Endothelial cell of umbilical vein (primary cell): ENCODE measurements at regions of chr11 and their contacts with region 1.

Region 1: GRCh38 chr11:108647701-108648527 is 17.0 kb upstream of the DDX10 start:
- DNase-seq: peak; percentile 77
- H3K4me3 ChIP-seq: no peak overlapping the region
- H3K27ac ChIP-seq: no peak overlapping the region
- H3K4me1 ChIP-seq: no peaks in the 10 kb centered on the region
- H3K27me3 ChIP-seq: peaks cover 0 to 3% of the 10 kb centered on the region in 2 experiments
- CTCF ChIP-seq: peak; percentile 77 to 84
- POLR2A ChIP-seq: no peak

Region 2: GRCh38 chr11:107999759-108000455 is 648.0 kb before region 1 on chr11:
- CTCF ChIA-PET with region 1: interaction called, 29 read pairs
- POLR2A ChIA-PET with region 1: no interaction called
- dilution Hi-C with region 1: no loop called
- intact Hi-C with region 1: no loop called
- DNase-seq: peak; percentile 61
- H3K4me3 ChIP-seq: no peak overlapping the region
- H3K27ac ChIP-seq: no peak overlapping the region
- H3K4me1 ChIP-seq: no peaks in the 10 kb centered on the region
- H3K27me3 ChIP-seq: peaks cover 2 to 3% of the 10 kb centered on the region in 2 experiments
- CTCF ChIP-seq: peak; percentile 27 to 52
- POLR2A ChIP-seq: no peak

Region 3: GRCh38 chr11:108121274-108122155 is 526.4 kb before region 1 on chr11 and contains the start of gene ACAT1:
- CTCF ChIA-PET with region 1: interaction called, 144 read pairs
- POLR2A ChIA-PET with region 1: no interaction called
- dilution Hi-C with region 1: no loop called
- intact Hi-C with region 1: loop called (anchors 1 kb)
- DNase-seq: peak; percentile 92
- H3K4me3 ChIP-seq: peak within 1 kb of the TSS; percentile 58 to 85 (median 60)
- H3K27ac ChIP-seq: peak within 1 kb of the TSS; percentile 19
- H3K4me1 ChIP-seq: peaks cover 16% of the 10 kb centered on the region
- H3K27me3 ChIP-seq: no peaks in the 10 kb centered on the region
- CTCF ChIP-seq: peak in 1 of 2 donors; percentile 38
- POLR2A ChIP-seq: peak; percentile 87
- total RNA-seq, gene ACAT1: 51.7 and 59.9 TPM in 2 replicates

Region 4: GRCh38 chr11:108324587-108324986 is 323.3 kb before region 1 on chr11:
- CTCF ChIA-PET with region 1: no interaction called
- POLR2A ChIA-PET with region 1: no interaction called
- dilution Hi-C with region 1: no loop called
- intact Hi-C with region 1: loop called (anchors 10 kb)
- DNase-seq: no peak
- H3K4me3 ChIP-seq: no peak overlapping the region
- H3K27ac ChIP-seq: no peak overlapping the region
- H3K4me1 ChIP-seq: no peaks in the 10 kb centered on the region
- H3K27me3 ChIP-seq: no peaks in the 10 kb centered on the region
- CTCF ChIP-seq: no peak
- POLR2A ChIP-seq: no peak

Region 5: GRCh38 chr11:108398439-108398838 is 249.5 kb before region 1 on chr11:
- CTCF ChIA-PET with region 1: no interaction called
- POLR2A ChIA-PET with region 1: no interaction called
- dilution Hi-C with region 1: no loop called
- intact Hi-C with region 1: no loop called
- DNase-seq: no peak
- H3K4me3 ChIP-seq: no peak overlapping the region
- H3K27ac ChIP-seq: no peak overlapping the region
- H3K4me1 ChIP-seq: no peaks in the 10 kb centered on the region
- H3K27me3 ChIP-seq: no peaks in the 10 kb centered on the region
- CTCF ChIP-seq: no peak
- POLR2A ChIP-seq: no peak

Region 6: GRCh38 chr11:108467091-108467823 is 180.7 kb before region 1 on chr11 and contains the start of gene C11orf65:
- CTCF ChIA-PET with region 1: no interaction called
- POLR2A ChIA-PET with region 1: no interaction called
- dilution Hi-C with region 1: no loop called
- intact Hi-C with region 1: loop called (anchors 5 kb)
- DNase-seq: peak; percentile 99
- H3K4me3 ChIP-seq: peak within 1 kb of the TSS; percentile 38 to 86 (median 62)
- H3K27ac ChIP-seq: peak within 1 kb of the TSS; percentile 97
- H3K4me1 ChIP-seq: peaks cover 3% of the 10 kb centered on the region
- H3K27me3 ChIP-seq: no peaks in the 10 kb centered on the region
- CTCF ChIP-seq: no peak
- POLR2A ChIP-seq: peak; percentile 97
- total RNA-seq, gene C11orf65: not detected in 2 replicates

Region 7: GRCh38 chr11:109085708-109086373 is 437.9 kb after region 1 on chr11:
- CTCF ChIA-PET with region 1: no interaction called
- POLR2A ChIA-PET with region 1: no interaction called
- dilution Hi-C with region 1: no loop called
- intact Hi-C with region 1: no loop called
- DNase-seq: no peak
- H3K4me3 ChIP-seq: no peak overlapping the region
- H3K27ac ChIP-seq: no peak overlapping the region
- H3K4me1 ChIP-seq: no peaks in the 10 kb centered on the region
- H3K27me3 ChIP-seq: no peaks in the 10 kb centered on the region
- CTCF ChIP-seq: no peak
- POLR2A ChIP-seq: no peak